MCF 10A (cell line): ENCODE measurements at regions of chr4 and their contacts with region 1.

Region 1: GRCh38 chr4:74228691-74229640 is 71.0 kb downstream of the MTHFD2L start:
- DNase-seq: peak; percentile 86
- H3K4me3 Mint-ChIP-seq: no peak overlapping the region
- H3K27ac Mint-ChIP-seq: no peak overlapping the region
- H3K4me1 Mint-ChIP-seq: peaks cover 28% of the 10 kb centered on the region
- H3K27me3 Mint-ChIP-seq: no peaks in the 10 kb centered on the region
- CTCF ChIP-seq: peak; percentile 81

Region 2: DNA sequence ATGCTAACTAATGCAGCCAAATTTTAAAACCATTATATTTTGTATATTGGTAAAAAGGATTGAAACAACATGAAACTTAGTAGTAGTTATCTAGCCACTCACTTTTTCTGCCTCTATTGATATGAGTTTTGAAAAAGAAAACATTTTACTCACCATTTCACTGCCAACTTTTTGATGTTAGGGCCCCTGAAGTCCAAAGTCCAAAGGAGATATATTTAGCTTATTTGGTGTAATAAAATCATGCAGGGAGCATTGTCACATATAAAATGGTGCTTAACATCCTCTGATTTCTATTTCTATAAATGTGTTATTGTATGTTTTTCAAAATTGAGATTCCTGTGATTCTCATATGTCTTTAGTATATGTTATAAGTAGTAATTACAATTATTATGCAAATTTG is 166.0 kb before region 1 on chr4:
- CTCF ChIA-PET with region 1: no interaction called
- POLR2A ChIA-PET with region 1: no interaction called
- intact Hi-C with region 1: no loop called
- DNase-seq: no peak
- H3K4me3 Mint-ChIP-seq: no peak overlapping the region
- H3K27ac Mint-ChIP-seq: no peak overlapping the region
- H3K4me1 Mint-ChIP-seq: peaks cover 5% of the 10 kb centered on the region
- H3K27me3 Mint-ChIP-seq: no peaks in the 10 kb centered on the region
- CTCF ChIP-seq: no peak

Region 3: GRCh38 chr4:74189331-74190043 is 39.5 kb before region 1 on chr4:
- CTCF ChIA-PET with region 1: interaction called, 9 read pairs
- POLR2A ChIA-PET with region 1: no interaction called
- intact Hi-C with region 1: loop called (anchors 5 kb)
- DNase-seq: peak; percentile 71
- H3K4me3 Mint-ChIP-seq: no peak overlapping the region
- H3K27ac Mint-ChIP-seq: no peak overlapping the region
- H3K4me1 Mint-ChIP-seq: no peaks in the 10 kb centered on the region
- H3K27me3 Mint-ChIP-seq: no peaks in the 10 kb centered on the region
- CTCF ChIP-seq: peak; percentile 61

Region 4: GRCh38 chr4:74267998-74268606 is 39.1 kb after region 1 on chr4:
- CTCF ChIA-PET with region 1: interaction called, 7 read pairs
- POLR2A ChIA-PET with region 1: interaction called, 11 read pairs
- intact Hi-C with region 1: loop called (anchors 1 kb)
- DNase-seq: peak; percentile 85
- H3K4me3 Mint-ChIP-seq: no peak overlapping the region
- H3K27ac Mint-ChIP-seq: peak overlapping the region; percentile 59
- H3K4me1 Mint-ChIP-seq: peaks cover 27% of the 10 kb centered on the region
- H3K27me3 Mint-ChIP-seq: no peaks in the 10 kb centered on the region
- CTCF ChIP-seq: no peak

Region 5: GRCh38 chr4:74297539-74297938 is 68.6 kb after region 1 on chr4:
- CTCF ChIA-PET with region 1: interaction called, 11 read pairs
- POLR2A ChIA-PET with region 1: interaction called, 3 read pairs
- intact Hi-C with region 1: no loop called
- DNase-seq: no peak
- H3K4me3 Mint-ChIP-seq: no peak overlapping the region
- H3K27ac Mint-ChIP-seq: no peak overlapping the region
- H3K4me1 Mint-ChIP-seq: no peaks in the 10 kb centered on the region
- H3K27me3 Mint-ChIP-seq: no peaks in the 10 kb centered on the region
- CTCF ChIP-seq: no peak

Region 6: GRCh38 chr4:74376888-74377483 is 148.0 kb after region 1 on chr4:
- CTCF ChIA-PET with region 1: interaction called, 3 read pairs
- POLR2A ChIA-PET with region 1: no interaction called
- intact Hi-C with region 1: loop called (anchors 1 kb)
- DNase-seq: peak; percentile 79
- H3K4me3 Mint-ChIP-seq: peak overlapping the region; percentile 71
- H3K27ac Mint-ChIP-seq: peak overlapping the region; percentile 97
- H3K4me1 Mint-ChIP-seq: peaks cover 20% of the 10 kb centered on the region
- H3K27me3 Mint-ChIP-seq: no peaks in the 10 kb centered on the region
- CTCF ChIP-seq: peak; percentile 71